Caco-2 (cell line): ENCODE measurements at regions of chr19 and their contacts with region 1.

Region 1: GRCh38 chr19:58466760-58467589 is at the start of gene ZNF324:
- DNase-seq: peak; percentile 98 to 99
- H3K4me3 ChIP-seq: peak within 1 kb of the TSS; percentile 97
- H3K4me3 Mint-ChIP-seq: peak within 1 kb of the TSS; percentile 81
- H3K27ac Mint-ChIP-seq: peak within 1 kb of the TSS; percentile 60
- H3K4me1 ChIP-seq: no peaks in the 10 kb centered on the region
- H3K4me1 Mint-ChIP-seq: peaks cover 11% of the 10 kb centered on the region
- H3K27me3 ChIP-seq: no peaks in the 10 kb centered on the region
- H3K27me3 Mint-ChIP-seq: no peaks in the 10 kb centered on the region
- CTCF ChIP-seq: peak in 1 of 2 experiments; percentile 2
- total RNA-seq, gene ZNF324: 9.8 and 10.6 TPM in 2 replicates

Region 2: GRCh38 chr19:58002384-58003173 is 464.4 kb before region 1 on chr19 and contains the start of gene ZNF606:
- CTCF ChIA-PET with region 1: no interaction called
- POLR2A ChIA-PET with region 1: no interaction called
- intact Hi-C with region 1: loop called (anchors 5 kb)
- DNase-seq: peak; percentile 87 to 90
- H3K4me3 ChIP-seq: peak within 1 kb of the TSS; percentile 96
- H3K4me3 Mint-ChIP-seq: peak within 1 kb of the TSS; percentile 78
- H3K27ac Mint-ChIP-seq: peak within 1 kb of the TSS; percentile 80
- H3K4me1 ChIP-seq: no peaks in the 10 kb centered on the region
- H3K4me1 Mint-ChIP-seq: peaks cover 7% of the 10 kb centered on the region
- H3K27me3 ChIP-seq: no peaks in the 10 kb centered on the region
- H3K27me3 Mint-ChIP-seq: peaks cover 3% of the 10 kb centered on the region
- CTCF ChIP-seq: no peak
- total RNA-seq, gene ZNF606: 13.0 and 13.9 TPM in 2 replicates

Region 3: DNA sequence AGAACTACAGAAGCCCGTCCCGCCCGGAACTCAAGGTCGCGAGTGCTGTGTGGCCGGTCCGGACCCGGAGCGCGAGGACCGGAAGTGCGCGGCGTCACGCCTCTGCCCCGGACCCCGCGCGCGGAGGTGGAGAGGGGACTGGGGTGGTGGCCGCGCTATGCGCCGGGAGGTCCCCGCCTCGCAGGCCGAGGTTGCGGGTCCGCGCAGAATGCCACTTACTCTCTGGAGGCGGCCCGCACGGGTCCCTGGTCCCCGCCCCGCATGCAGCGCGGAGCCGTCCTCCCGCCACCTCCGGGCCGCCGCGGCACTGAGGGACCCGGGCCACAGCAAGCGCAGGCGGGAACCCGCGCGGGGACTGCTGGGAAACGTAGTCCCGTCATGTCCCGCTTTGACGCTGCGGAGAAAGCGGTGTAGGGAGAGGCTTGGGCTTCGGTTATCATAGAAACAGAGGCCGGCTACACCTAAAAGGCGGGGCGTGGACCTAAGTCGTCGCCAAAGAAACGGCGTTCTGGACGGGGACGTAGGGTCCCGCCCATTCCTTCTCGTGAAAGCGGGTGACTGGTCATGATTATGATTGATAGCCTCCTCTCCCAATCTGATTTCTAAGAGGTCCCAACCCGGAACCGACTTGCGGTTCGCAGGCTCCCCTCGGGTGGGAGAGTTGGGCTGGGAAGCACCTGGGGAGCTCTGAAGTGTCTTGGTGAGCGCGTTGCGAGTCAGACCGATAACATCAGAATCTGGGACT is 86.1 kb before region 1 on chr19 and contains the start of gene ZNF837:
- CTCF ChIA-PET with region 1: no interaction called
- POLR2A ChIA-PET with region 1: no interaction called
- intact Hi-C with region 1: loop called (anchors 2 kb)
- DNase-seq: peak; percentile 99 to 100
- H3K4me3 ChIP-seq: peak within 1 kb of the TSS; percentile 68
- H3K4me3 Mint-ChIP-seq: peak within 1 kb of the TSS; percentile 87
- H3K27ac Mint-ChIP-seq: peak within 1 kb of the TSS; percentile 85
- H3K4me1 ChIP-seq: peaks cover 18% of the 10 kb centered on the region
- H3K4me1 Mint-ChIP-seq: peaks cover 12% of the 10 kb centered on the region
- H3K27me3 ChIP-seq: no peaks in the 10 kb centered on the region
- H3K27me3 Mint-ChIP-seq: no peaks in the 10 kb centered on the region
- CTCF ChIP-seq: no peak
- total RNA-seq, gene ZNF837: 2.2 and 2.3 TPM in 2 replicates

Region 4: GRCh38 chr19:58408152-58409009 is 58.6 kb before region 1 on chr19 and contains the start of gene ZNF584:
- CTCF ChIA-PET with region 1: no interaction called
- POLR2A ChIA-PET with region 1: no interaction called
- intact Hi-C with region 1: loop called (anchors 1 kb)
- DNase-seq: peak; percentile 94 to 97
- H3K4me3 ChIP-seq: peak within 1 kb of the TSS; percentile 73
- H3K4me3 Mint-ChIP-seq: peak within 1 kb of the TSS; percentile 95
- H3K27ac Mint-ChIP-seq: peak within 1 kb of the TSS; percentile 87
- H3K4me1 ChIP-seq: peaks cover 16% of the 10 kb centered on the region
- H3K4me1 Mint-ChIP-seq: peaks cover 22% of the 10 kb centered on the region
- H3K27me3 ChIP-seq: no peaks in the 10 kb centered on the region
- H3K27me3 Mint-ChIP-seq: no peaks in the 10 kb centered on the region
- CTCF ChIP-seq: no peak
- total RNA-seq, gene ZNF584: 4.9 and 5.7 TPM in 2 replicates

Region 5: GRCh38 chr19:58451358-58452101 is 15.4 kb before region 1 on chr19 and contains the start of gene ZNF324B:
- CTCF ChIA-PET with region 1: interaction called, 3 read pairs
- POLR2A ChIA-PET with region 1: no interaction called
- intact Hi-C with region 1: loop called (anchors 2 kb)
- DNase-seq: peak; percentile 96 to 97
- H3K4me3 ChIP-seq: peak within 1 kb of the TSS; percentile 72
- H3K4me3 Mint-ChIP-seq: peak within 1 kb of the TSS; percentile 90
- H3K27ac Mint-ChIP-seq: peak within 1 kb of the TSS; percentile 86
- H3K4me1 ChIP-seq: peaks cover 3% of the 10 kb centered on the region; the same call in 1 of the 2 replicates
- H3K4me1 Mint-ChIP-seq: peaks cover 19% of the 10 kb centered on the region
- H3K27me3 ChIP-seq: no peaks in the 10 kb centered on the region
- H3K27me3 Mint-ChIP-seq: no peaks in the 10 kb centered on the region
- CTCF ChIP-seq: no peak
- total RNA-seq, gene ZNF324B: 4.6 and 6.8 TPM in 2 replicates

Region 6: GRCh38 chr19:58499021-58499927 is 32.3 kb after region 1 on chr19:
- CTCF ChIA-PET with region 1: no interaction called
- POLR2A ChIA-PET with region 1: no interaction called
- intact Hi-C with region 1: loop called (anchors 2 kb)
- DNase-seq: peak; percentile 100
- H3K4me3 ChIP-seq: peak overlapping the region; percentile 69
- H3K4me3 Mint-ChIP-seq: peak overlapping the region; percentile 78
- H3K27ac Mint-ChIP-seq: peak overlapping the region; percentile 73
- H3K4me1 ChIP-seq: peaks cover 8% of the 10 kb centered on the region; the same call in 1 of the 2 replicates
- H3K4me1 Mint-ChIP-seq: peaks cover 7% of the 10 kb centered on the region
- H3K27me3 ChIP-seq: no peaks in the 10 kb centered on the region
- H3K27me3 Mint-ChIP-seq: no peaks in the 10 kb centered on the region
- CTCF ChIP-seq: peak; percentile 39 to 68

Region 7: DNA sequence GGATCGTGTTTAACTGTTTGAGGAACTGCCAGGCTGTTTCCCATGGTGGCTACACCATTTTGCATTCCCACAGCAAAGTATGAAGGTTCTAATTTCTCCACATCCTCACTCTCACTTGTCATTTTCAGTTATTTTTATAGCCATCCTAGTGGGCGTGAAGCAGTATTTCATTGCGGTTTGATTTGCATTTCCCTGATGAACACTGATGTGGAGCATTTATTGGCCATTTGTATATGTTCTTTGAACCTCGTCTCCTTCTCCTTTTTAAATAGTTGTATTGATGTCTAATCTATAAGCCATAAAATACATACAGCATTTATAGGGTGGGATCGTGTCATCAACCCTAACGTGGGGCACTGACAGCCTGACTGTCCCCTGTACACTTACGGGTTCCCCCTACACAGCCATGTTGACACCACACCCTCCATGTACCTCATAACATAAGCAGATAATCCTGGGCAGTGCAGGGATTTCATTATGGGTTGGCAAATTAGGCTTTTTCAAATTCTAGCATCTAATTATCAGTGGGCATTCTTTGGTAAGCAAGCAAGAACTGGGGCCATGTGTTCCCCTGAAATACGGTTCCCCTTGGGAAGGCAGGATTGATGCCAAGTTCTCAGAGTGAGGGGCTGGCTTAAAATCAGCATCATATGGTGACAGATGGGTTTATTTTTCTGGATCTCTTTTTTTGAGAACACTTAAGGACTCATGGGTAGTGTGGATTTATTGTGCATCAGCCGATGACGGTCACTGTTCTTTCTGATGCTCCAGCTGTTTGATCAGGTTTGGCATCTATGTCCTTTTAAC is 64.3 kb after region 1 on chr19:
- CTCF ChIA-PET with region 1: no interaction called
- POLR2A ChIA-PET with region 1: no interaction called
- intact Hi-C with region 1: no loop called
- DNase-seq: no peak
- H3K4me3 ChIP-seq: no peak overlapping the region
- H3K4me3 Mint-ChIP-seq: no peak overlapping the region
- H3K27ac Mint-ChIP-seq: no peak overlapping the region
- H3K4me1 ChIP-seq: no peaks in the 10 kb centered on the region
- H3K4me1 Mint-ChIP-seq: no peaks in the 10 kb centered on the region
- H3K27me3 ChIP-seq: no peaks in the 10 kb centered on the region
- H3K27me3 Mint-ChIP-seq: peaks cover 6% of the 10 kb centered on the region
- CTCF ChIP-seq: no peak